Activated naive CD4-positive, alpha-beta T cell treated with anti-CD3 and anti-CD28 coated beads for 36 hours (primary cell): ENCODE measurements at regions of chr5 and their contacts with region 1.

Region 1: DNA sequence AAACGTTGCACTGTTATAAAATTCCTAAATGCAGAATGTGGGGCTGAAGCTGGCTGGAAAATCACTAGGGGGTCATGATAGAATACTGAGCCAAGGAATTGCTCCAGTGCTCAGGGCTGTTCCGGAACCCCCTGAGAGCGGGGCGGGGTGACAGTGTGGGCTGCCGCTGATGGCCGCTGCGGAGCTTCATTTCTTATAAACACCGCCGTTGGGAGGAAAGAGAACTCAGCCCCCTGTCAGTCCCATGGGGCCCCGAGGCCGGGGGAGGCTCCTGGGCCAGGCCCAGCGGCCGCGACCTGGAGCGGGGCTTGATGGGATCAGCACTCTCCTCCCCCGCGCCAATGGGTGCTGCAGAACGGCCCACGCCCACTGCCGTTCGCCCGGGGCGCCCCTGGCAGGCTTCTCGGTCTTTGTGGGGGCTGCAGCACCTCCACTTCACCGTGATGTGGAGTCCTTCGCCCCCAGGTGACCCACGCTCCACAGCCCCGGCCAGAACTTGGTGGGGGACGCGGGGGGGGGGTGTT is 5.2 kb upstream of the IRF1 start:
- DNase-seq: peak; percentile 79
- H3K4me3 Mint-ChIP-seq: peak overlapping the region; percentile 84
- H3K27ac Mint-ChIP-seq: peak overlapping the region; percentile 91
- H3K4me1 Mint-ChIP-seq: peaks cover 56% of the 10 kb centered on the region
- H3K27me3 Mint-ChIP-seq: no peaks in the 10 kb centered on the region

Region 2: GRCh38 chr5:132456296-132457001 is 39.3 kb before region 1 on chr5:
- CTCF ChIA-PET with region 1: interaction called, 8 read pairs
- intact Hi-C with region 1: loop called (anchors 1 kb)
- DNase-seq: peak; percentile 66
- H3K4me3 Mint-ChIP-seq: peak overlapping the region; percentile 0
- H3K27ac Mint-ChIP-seq: peak overlapping the region; percentile 83
- H3K4me1 Mint-ChIP-seq: peaks cover 84% of the 10 kb centered on the region
- H3K27me3 Mint-ChIP-seq: no peaks in the 10 kb centered on the region

Region 3: GRCh38 chr5:132506094-132506692 is 10.5 kb after region 1 on chr5:
- CTCF ChIA-PET with region 1: interaction called, 25 read pairs
- intact Hi-C with region 1: no loop called
- DNase-seq: peak; percentile 32
- H3K4me3 Mint-ChIP-seq: no peak overlapping the region
- H3K27ac Mint-ChIP-seq: no peak overlapping the region
- H3K4me1 Mint-ChIP-seq: no peaks in the 10 kb centered on the region
- H3K27me3 Mint-ChIP-seq: peaks cover 11% of the 10 kb centered on the region

Region 4: GRCh38 chr5:132556763-132557477 is 61.2 kb after region 1 on chr5 and contains the start of gene RAD50:
- CTCF ChIA-PET with region 1: no interaction called
- intact Hi-C with region 1: loop called (anchors 2 kb)
- DNase-seq: peak; percentile 96
- H3K4me3 Mint-ChIP-seq: peak within 1 kb of the TSS; percentile 98
- H3K27ac Mint-ChIP-seq: peak within 1 kb of the TSS; percentile 94
- H3K4me1 Mint-ChIP-seq: peaks cover 15% of the 10 kb centered on the region
- H3K27me3 Mint-ChIP-seq: no peaks in the 10 kb centered on the region
- total RNA-seq, gene RAD50: 39.1 to 42.4 TPM

Region 5: GRCh38 chr5:132612846-132613245 is 117.1 kb after region 1 on chr5:
- CTCF ChIA-PET with region 1: no interaction called
- intact Hi-C with region 1: no loop called
- DNase-seq: no peak
- H3K4me3 Mint-ChIP-seq: no peak overlapping the region
- H3K27ac Mint-ChIP-seq: no peak overlapping the region
- H3K4me1 Mint-ChIP-seq: no peaks in the 10 kb centered on the region
- H3K27me3 Mint-ChIP-seq: no peaks in the 10 kb centered on the region